ENCODE measurements at regions of chr14 and their contacts with region 1.

Region 1: GRCh38 chr14:26252176-26252575 is 345.7 kb downstream of the NOVA1 start:
- DNase-seq: no peak
- H3K4me3 ChIP-seq: no peak overlapping the region
- CTCF ChIP-seq: no peak
- POLR2A ChIP-seq: no peak

Region 2: GRCh38 chr14:26332966-26333365 is 80.8 kb after region 1 on chr14:
- intact Hi-C with region 1: no loop called
- DNase-seq: peak in 1 of 2 donors; percentile 34
- H3K4me3 ChIP-seq: no peak overlapping the region
- CTCF ChIP-seq: no peak
- POLR2A ChIP-seq: no peak

Region 3: DNA sequence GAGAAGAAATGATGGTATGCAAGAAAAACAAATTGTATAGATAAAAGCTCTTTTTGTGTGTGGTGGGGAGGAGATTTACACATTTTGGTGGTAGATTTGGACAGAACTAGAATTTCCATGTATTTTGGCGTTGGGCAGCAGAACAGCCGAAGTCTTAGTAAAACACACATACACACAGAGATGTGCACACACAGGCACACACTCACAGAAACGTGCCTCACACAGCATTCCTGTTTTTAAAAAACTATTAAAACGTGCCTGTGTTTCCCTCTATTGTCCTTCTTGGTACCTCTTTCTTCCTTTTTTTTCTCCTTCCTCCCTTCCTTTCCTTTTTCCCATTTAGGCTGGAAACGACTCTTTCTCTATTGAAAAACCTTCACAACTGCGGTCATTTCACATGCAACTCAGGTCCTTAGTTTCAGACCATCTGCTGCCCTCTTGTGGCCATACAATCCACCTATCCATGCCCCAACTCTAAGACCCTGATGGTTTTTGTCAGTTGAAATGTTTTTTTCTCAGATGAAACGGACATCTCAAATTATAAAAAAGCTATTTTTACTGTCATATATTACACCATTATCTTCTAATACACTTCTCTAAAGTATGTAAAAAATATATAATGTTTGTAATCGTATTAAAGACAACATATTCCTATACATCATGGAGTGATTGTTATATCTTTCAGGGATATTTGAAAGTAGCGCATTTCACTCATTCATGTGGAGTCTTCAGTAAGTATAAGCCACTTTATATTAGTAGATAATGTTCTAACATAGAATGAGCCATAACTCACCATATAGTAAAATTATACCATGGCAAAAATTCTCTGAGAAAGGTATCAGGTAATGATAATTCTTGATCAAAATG is 732.4 kb after region 1 on chr14:
- intact Hi-C with region 1: loop called (anchors 10 kb)
- DNase-seq: peak in 1 of 2 donors; percentile 49
- H3K4me3 ChIP-seq: no peak overlapping the region
- CTCF ChIP-seq: peak in 1 of 3 donors; percentile 39
- POLR2A ChIP-seq: no peak

Measured in lower leg skin (tissue), 4 donors.